Psoas muscle (tissue), 8 donors: ENCODE measurements at regions of chr13 and their contacts with region 1.

Region 1: DNA sequence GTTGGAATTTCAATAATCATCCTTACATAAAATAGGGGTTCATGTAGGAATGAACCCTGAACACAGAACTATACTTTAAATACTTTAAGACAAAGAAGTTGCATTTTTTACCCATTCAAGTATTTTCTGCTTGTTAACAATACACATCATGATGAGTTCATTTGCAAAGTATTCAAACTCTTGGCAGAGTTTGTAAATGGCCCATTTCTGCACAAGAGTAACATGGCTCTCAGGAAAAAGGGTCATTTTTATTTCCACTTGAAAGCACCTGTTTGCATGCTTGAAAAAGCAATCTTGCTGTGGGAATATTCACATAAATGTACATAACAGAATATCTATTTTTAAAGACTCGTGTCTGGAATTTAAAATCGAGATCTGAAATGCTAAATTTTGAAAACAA is 18.1 kb downstream of the ESD start:
- DNase-seq: no peak
- ATAC-seq: no peak
- H3K4me3 ChIP-seq: no peak overlapping the region
- H3K27ac ChIP-seq: no peak overlapping the region
- H3K4me1 ChIP-seq: no peaks in the 10 kb centered on the region
- H3K27me3 ChIP-seq: no peaks in the 10 kb centered on the region
- CTCF ChIP-seq: no peak

Region 2: GRCh38 chr13:45966715-45967114 is 812.2 kb before region 1 on chr13:
- intact Hi-C with region 1: loop called in 1 of 2 experiments (anchors 10 kb)
- DNase-seq: no peak
- ATAC-seq: no peak
- H3K4me3 ChIP-seq: no peak overlapping the region
- H3K27ac ChIP-seq: no peak overlapping the region
- H3K4me1 ChIP-seq: no peaks in the 10 kb centered on the region
- H3K27me3 ChIP-seq: no peaks in the 10 kb centered on the region
- CTCF ChIP-seq: no peak